ENCODE measurements at regions of chr18 and their contacts with region 1.

Region 1: GRCh38 chr18:9516437-9517064 is 41.2 kb downstream of the RALBP1 start:
- DNase-seq: peak; percentile 27
- ATAC-seq: peak; percentile 57
- H3K4me3 Mint-ChIP-seq: no peak overlapping the region
- H3K27ac Mint-ChIP-seq: no peak overlapping the region
- H3K4me1 Mint-ChIP-seq: no peaks in the 10 kb centered on the region
- H3K27me3 Mint-ChIP-seq: no peaks in the 10 kb centered on the region

Region 2: GRCh38 chr18:9506046-9506792 is 10.3 kb before region 1 on chr18:
- CTCF ChIA-PET with region 1: interaction called, 12 read pairs
- POLR2A ChIA-PET with region 1: no interaction called
- DNase-seq: no peak
- ATAC-seq: no peak
- H3K4me3 Mint-ChIP-seq: no peak overlapping the region
- H3K27ac Mint-ChIP-seq: no peak overlapping the region
- H3K4me1 Mint-ChIP-seq: no peaks in the 10 kb centered on the region
- H3K27me3 Mint-ChIP-seq: no peaks in the 10 kb centered on the region